Calu3 (cell line): ENCODE measurements at regions of chr2 and their contacts with region 1.

Region 1: DNA sequence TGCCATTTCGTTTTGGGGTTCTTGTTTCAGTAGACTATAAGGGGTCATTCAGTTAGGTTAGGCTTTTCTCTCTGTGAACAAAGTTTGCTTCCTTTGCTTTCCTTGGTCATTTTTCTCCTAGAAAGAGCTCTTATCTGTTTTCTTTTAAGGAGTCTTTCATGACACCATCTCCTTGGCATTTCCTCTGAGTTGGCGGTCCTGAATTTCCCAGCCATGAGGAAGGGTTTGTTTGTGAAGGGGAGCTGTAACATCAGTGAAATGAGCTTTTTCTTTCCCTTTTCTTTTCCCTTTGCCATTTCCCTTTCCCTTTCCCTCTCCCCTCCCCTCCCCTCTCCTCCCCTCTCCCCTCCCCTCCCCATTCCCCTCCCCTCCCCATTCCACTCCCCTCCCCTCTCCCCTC is 61.7 kb downstream of the MAP4K4 start:
- DNase-seq: peak; percentile 54
- H3K4me3 Mint-ChIP-seq: peak overlapping the region; percentile 28
- H3K27ac Mint-ChIP-seq: peak overlapping the region; percentile 83
- H3K4me1 Mint-ChIP-seq: peaks cover 74% of the 10 kb centered on the region
- H3K27me3 Mint-ChIP-seq: no peaks in the 10 kb centered on the region
- CTCF ChIP-seq: no peak

Region 2: DNA sequence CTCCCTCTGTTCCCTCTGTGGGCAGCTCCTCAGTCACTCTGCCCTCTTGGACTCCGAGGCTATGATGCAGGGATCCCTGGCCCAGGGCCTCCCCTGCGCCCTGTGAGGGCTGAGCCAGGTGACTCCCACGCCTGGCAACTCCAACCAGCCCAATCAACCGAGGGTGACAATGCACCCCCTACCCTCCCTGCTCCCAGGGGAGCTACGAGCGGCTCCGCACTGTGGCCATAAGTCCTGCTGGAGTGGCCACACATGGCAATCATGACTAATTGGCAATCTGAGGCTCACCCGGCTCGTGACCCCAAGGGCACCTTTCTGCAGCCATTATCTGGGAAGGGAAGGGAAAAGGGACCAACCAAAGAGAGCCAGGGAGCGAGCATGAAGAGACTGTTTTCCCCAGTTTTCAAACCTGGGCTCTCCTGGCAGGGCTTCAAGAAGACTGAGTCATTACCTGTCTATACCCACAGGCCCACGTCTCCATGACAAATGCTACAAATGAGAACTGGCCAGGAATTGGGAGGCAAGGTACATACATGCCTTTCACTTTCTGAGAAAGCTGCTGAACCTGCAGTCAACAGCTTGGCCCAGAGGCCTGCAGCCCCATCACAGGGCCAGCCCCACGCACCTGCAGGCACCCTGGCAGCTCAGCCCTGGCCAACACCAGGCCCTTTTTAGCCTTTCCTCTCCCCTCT is 711.9 kb before region 1 on chr2:
- CTCF ChIA-PET with region 1: no interaction called
- intact Hi-C with region 1: no loop called
- DNase-seq: peak; percentile 67
- H3K4me3 Mint-ChIP-seq: no peak overlapping the region
- H3K27ac Mint-ChIP-seq: no peak overlapping the region
- H3K4me1 Mint-ChIP-seq: peaks cover 14% of the 10 kb centered on the region
- H3K27me3 Mint-ChIP-seq: no peaks in the 10 kb centered on the region
- CTCF ChIP-seq: no peak

Region 3: DNA sequence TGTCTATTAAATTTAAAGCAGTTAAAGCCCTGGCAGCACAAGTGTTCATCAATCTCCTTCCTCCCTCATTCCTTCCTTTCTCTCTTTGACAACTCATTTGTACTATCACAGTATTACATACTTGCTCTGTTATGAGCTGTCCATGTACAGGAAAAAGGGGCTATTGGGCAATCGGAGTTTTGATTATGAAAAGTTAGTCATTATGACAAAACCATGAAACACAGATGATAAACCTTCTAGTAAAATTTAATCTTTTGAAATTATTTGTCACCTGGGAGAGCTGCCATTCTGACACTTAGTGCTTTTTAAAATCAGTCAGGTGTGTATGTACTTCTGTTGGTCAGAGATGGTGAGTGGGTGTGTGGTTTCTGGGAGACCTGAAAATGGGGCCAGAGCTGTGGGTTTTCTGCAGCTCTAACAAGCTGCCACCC is 22.3 kb before region 1 on chr2:
- CTCF ChIA-PET with region 1: interaction called, 3 read pairs
- intact Hi-C with region 1: loop called (anchors 2 kb)
- DNase-seq: no peak
- H3K4me3 Mint-ChIP-seq: peak overlapping the region; percentile 45
- H3K27ac Mint-ChIP-seq: peak overlapping the region; percentile 77
- H3K4me1 Mint-ChIP-seq: peaks cover 65% of the 10 kb centered on the region
- H3K27me3 Mint-ChIP-seq: no peaks in the 10 kb centered on the region
- CTCF ChIP-seq: no peak

Region 4: GRCh38 chr2:101746388-101746723 is 12.8 kb before region 1 on chr2:
- CTCF ChIA-PET with region 1: interaction called, 11 read pairs
- intact Hi-C with region 1: no loop called
- DNase-seq: no peak
- H3K4me3 Mint-ChIP-seq: peak overlapping the region; percentile 48
- H3K27ac Mint-ChIP-seq: peak overlapping the region; percentile 86
- H3K4me1 Mint-ChIP-seq: peaks cover 82% of the 10 kb centered on the region
- H3K27me3 Mint-ChIP-seq: no peaks in the 10 kb centered on the region
- CTCF ChIP-seq: no peak

Region 5: GRCh38 chr2:101770726-101771125 is 11.6 kb after region 1 on chr2:
- CTCF ChIA-PET with region 1: interaction called, 11 read pairs
- intact Hi-C with region 1: no loop called
- DNase-seq: peak; percentile 51
- H3K4me3 Mint-ChIP-seq: no peak overlapping the region
- H3K27ac Mint-ChIP-seq: peak overlapping the region; percentile 61
- H3K4me1 Mint-ChIP-seq: peaks cover 58% of the 10 kb centered on the region
- H3K27me3 Mint-ChIP-seq: no peaks in the 10 kb centered on the region
- CTCF ChIP-seq: no peak

Region 6: GRCh38 chr2:101949304-101949703 is 190.1 kb after region 1 on chr2:
- CTCF ChIA-PET with region 1: no interaction called
- intact Hi-C with region 1: no loop called
- DNase-seq: no peak
- H3K4me3 Mint-ChIP-seq: no peak overlapping the region
- H3K27ac Mint-ChIP-seq: no peak overlapping the region
- H3K4me1 Mint-ChIP-seq: no peaks in the 10 kb centered on the region
- H3K27me3 Mint-ChIP-seq: peaks cover 4% of the 10 kb centered on the region
- CTCF ChIP-seq: no peak